Right ventricle myocardium inferior (tissue), 1 donor: ENCODE measurements at regions of chr1 and their contacts with region 1.

Region 1: GRCh38 chr1:173867753-173868265 is at the start of gene GAS5:
- DNase-seq: peak; percentile 99
- ATAC-seq: peak; percentile 97
- total RNA-seq, gene GAS5: 46.4 TPM

Region 2: GRCh38 chr1:173832748-173833147 is 35.1 kb before region 1 on chr1:
- intact Hi-C with region 1: no loop called
- DNase-seq: no peak
- ATAC-seq: no peak

Region 3: DNA sequence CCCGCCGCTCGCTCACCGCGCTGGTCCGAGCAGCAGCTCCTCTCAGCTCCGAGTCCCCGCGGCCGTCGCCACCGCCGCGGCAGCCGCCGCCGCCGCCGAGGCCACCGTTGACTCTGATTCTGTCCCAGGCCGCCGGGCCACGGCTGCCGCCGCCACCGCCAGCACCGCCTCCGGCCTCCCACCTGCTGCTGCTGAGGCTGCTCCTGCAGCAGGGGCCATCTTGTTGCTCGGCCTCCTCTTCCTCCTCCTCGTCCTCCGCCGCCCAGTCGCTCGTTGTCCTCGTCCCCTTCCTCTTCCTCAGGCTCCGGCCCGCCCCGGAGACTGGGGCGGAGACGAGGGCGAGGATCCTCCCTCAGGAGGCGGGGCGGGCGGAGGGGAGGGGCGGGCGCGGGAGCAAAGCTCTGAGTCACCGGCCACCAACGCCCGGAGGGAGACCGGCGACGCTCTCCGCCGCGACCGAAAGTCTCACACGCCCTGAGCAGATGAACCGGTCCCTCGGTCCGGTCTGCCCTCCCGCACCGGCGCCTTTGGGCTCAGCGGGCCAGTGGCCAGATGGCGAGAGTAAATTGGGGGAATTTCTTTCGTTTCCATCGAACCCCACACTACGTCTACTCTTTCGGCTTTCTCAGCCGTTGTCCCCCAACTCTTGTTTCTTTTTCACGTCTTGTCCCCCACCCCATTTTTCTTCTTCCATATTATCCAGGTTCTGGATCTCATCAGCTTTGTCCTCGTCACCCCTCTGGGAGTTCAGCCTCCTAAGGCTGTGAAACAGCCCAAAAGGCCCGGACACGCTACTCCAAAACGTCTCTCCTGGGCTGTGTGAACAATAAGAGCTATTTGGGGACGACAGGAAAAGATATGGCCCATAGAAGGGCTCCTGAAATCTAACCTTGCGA is 154.5 kb after region 1 on chr1 and contains the start of gene RC3H1:
- intact Hi-C with region 1: loop called (anchors 5 kb)
- DNase-seq: peak; percentile 97
- ATAC-seq: peak; percentile 98
- total RNA-seq, gene RC3H1: 20.2 TPM

Region 4: GRCh38 chr1:174074757-174075156 is 206.9 kb after region 1 on chr1:
- intact Hi-C with region 1: loop called (anchors 10 kb)
- DNase-seq: no peak
- ATAC-seq: no peak

Region 5: GRCh38 chr1:174999216-174999925 is 1131.6 kb after region 1 on chr1:
- intact Hi-C with region 1: loop called (anchors 2 kb)
- DNase-seq: peak; percentile 98
- ATAC-seq: peak; percentile 95